Activated CD8-positive, alpha-beta T cell treated with anti-CD3 and anti-CD28 coated beads, Interleukin-2, amount 10 ng/mL, durations not matched to agents 7 days and 5 days (primary cell): ENCODE measurements at regions of chr10 and their contacts with region 1.

Region 1: GRCh38 chr10:103396064-103396788 is at the starts of genes ATP5MK and PDCD11:
- DNase-seq: peak; percentile 98
- ATAC-seq: peak; percentile 99
- H3K4me3 Mint-ChIP-seq: peak within 1 kb of the TSS; percentile 93
- H3K27ac Mint-ChIP-seq: peak within 1 kb of the TSS; percentile 94
- H3K4me1 Mint-ChIP-seq: peaks cover 48% of the 10 kb centered on the region
- H3K27me3 Mint-ChIP-seq: no peaks in the 10 kb centered on the region
- total RNA-seq, gene ATP5MK: 360 to 363 TPM
- total RNA-seq, gene PDCD11: 57.1 to 57.4 TPM

Region 2: DNA sequence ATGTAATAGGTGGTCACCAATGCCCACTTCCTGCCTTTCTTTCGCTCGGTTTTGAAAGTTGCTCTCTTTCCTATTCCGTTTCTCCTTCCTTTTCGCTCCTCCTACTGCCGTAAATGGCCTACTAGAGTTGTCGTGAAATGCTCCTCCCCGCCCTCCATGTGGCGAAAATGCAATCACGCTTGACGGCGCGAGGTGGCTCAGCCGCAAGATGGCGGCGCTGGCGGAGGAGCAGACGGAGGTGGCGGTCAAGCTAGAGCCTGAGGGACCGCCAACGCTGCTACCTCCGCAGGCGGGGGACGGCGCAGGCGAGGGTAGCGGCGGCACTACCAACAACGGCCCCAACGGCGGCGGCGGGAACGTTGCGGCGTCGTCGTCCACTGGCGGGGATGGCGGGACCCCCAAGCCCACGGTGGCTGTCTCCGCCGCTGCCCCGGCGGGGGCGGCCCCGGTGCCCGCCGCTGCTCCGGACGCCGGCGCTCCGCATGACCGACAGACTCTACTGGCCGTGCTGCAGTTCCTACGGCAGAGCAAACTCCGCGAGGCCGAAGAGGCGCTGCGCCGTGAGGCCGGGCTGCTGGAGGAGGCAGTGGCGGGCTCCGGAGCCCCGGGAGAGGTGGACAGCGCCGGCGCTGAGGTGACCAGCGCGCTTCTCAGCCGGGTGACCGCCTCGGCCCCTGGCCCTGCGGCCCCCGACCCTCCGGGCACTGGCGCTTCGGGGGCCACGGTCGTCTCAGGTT is 28.3 kb before region 1 on chr10 and contains the start of gene TAF5:
- CTCF ChIA-PET with region 1: interaction called, 5 read pairs
- POLR2A ChIA-PET with region 1: interaction called, 15 read pairs
- DNase-seq: peak; percentile 96
- ATAC-seq: peak; percentile 64
- H3K4me3 Mint-ChIP-seq: peak within 1 kb of the TSS; percentile 89
- H3K27ac Mint-ChIP-seq: peak within 1 kb of the TSS; percentile 93
- H3K4me1 Mint-ChIP-seq: peaks cover 23% of the 10 kb centered on the region
- H3K27me3 Mint-ChIP-seq: no peaks in the 10 kb centered on the region
- total RNA-seq, gene TAF5: 14.5 to 14.8 TPM